ENCODE measurements at regions of chr17 and their contacts with region 1.

Region 1: GRCh38 chr17:44385287-44386181 is 3.9 kb downstream of the ITGA2B start:
- DNase-seq: peak; percentile 91
- H3K4me3 Mint-ChIP-seq: peak overlapping the region; percentile 69
- H3K27ac Mint-ChIP-seq: no peak overlapping the region
- H3K4me1 Mint-ChIP-seq: peaks cover 7% of the 10 kb centered on the region
- H3K27me3 Mint-ChIP-seq: peaks cover 37% of the 10 kb centered on the region
- CTCF ChIP-seq: no peak

Region 2: DNA sequence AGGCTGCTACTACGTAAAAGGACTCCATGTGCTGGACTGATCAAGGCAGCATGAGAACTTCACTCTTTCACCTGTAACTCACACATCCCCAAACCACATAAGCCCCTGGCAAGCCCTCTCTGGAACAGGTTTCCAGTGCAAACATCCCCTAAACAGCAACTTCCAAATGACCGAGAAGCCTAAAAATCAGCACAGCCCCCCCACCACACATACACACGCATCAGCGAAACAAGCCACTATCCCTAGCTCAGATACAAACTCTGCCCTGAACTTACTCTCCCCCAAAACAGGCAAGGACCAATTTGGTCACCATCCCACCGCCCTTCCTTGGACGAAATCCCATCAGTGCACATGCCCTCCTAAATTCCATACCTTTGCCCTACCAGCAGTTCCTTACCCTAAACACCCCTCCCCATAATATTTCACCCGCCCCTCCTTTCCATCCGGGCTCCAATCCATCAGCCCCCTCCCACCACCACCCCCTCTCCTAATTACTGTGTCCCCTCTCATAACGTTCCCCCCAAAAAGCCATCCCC is 319.8 kb before region 1 on chr17:
- CTCF ChIA-PET with region 1: no interaction called
- intact Hi-C with region 1: no loop called
- DNase-seq: no peak
- H3K4me3 Mint-ChIP-seq: peak overlapping the region; percentile 88
- H3K27ac Mint-ChIP-seq: peak overlapping the region; percentile 85
- H3K4me1 Mint-ChIP-seq: peaks cover 42% of the 10 kb centered on the region
- H3K27me3 Mint-ChIP-seq: no peaks in the 10 kb centered on the region
- CTCF ChIP-seq: no peak

Region 3: DNA sequence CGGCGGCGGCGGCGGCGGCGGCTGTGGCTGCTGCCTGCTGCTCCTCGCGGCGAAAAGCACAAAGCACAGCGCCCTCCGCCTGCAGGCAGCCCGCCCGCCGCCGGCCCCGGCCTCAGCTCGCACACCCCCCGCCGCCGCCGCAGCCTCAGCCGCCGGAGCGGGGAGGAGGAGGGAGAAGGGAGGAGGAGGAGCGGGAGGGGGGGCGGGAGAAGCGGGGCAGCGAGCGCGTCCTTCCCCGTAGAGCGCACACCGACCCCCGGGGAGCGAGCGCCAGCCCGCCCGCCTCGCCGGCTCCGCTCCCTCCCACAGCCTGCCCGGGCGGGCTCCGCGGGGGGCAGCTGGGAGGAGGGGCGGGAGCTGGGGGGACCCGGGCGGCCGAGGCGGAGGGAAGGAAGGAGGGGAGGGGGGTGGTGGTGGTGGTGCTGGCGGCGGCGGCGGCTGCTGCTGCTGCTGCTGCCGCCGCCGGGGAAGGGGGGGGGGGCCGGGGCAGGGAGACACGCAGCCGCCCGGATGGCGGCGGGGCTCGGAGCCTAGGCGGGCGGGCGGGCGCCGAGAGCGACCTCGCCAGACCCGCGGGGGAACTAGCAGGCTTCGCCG is 165.8 kb before region 1 on chr17 and contains the start of gene UBTF:
- CTCF ChIA-PET with region 1: interaction called, 10 read pairs
- intact Hi-C with region 1: no loop called
- DNase-seq: peak; percentile 83
- H3K4me3 Mint-ChIP-seq: peak within 1 kb of the TSS; percentile 86
- H3K27ac Mint-ChIP-seq: peak within 1 kb of the TSS; percentile 79
- H3K4me1 Mint-ChIP-seq: peaks cover 37% of the 10 kb centered on the region
- H3K27me3 Mint-ChIP-seq: no peaks in the 10 kb centered on the region
- CTCF ChIP-seq: no peak
- total RNA-seq, gene UBTF: 92.1 and 94.2 TPM in 2 replicates

Region 4: GRCh38 chr17:44266402-44267164 is 119.0 kb before region 1 on chr17:
- CTCF ChIA-PET with region 1: no interaction called
- intact Hi-C with region 1: no loop called
- DNase-seq: no peak
- H3K4me3 Mint-ChIP-seq: no peak overlapping the region
- H3K27ac Mint-ChIP-seq: no peak overlapping the region
- H3K4me1 Mint-ChIP-seq: no peaks in the 10 kb centered on the region
- H3K27me3 Mint-ChIP-seq: peaks cover 58% of the 10 kb centered on the region
- CTCF ChIP-seq: no peak

Region 5: GRCh38 chr17:44363613-44364159 is 21.8 kb before region 1 on chr17 and contains the start of gene FAM171A2:
- CTCF ChIA-PET with region 1: interaction called, 10 read pairs
- intact Hi-C with region 1: no loop called
- DNase-seq: peak; percentile 87
- H3K4me3 Mint-ChIP-seq: peak within 1 kb of the TSS; percentile 63
- H3K27ac Mint-ChIP-seq: no peak within 1 kb of the TSS
- H3K4me1 Mint-ChIP-seq: peaks cover 10% of the 10 kb centered on the region
- H3K27me3 Mint-ChIP-seq: peaks cover 87% of the 10 kb centered on the region
- CTCF ChIP-seq: peak; percentile 96
- total RNA-seq, gene FAM171A2: 0.95 and 2.0 TPM in 2 replicates

Region 6: GRCh38 chr17:44444735-44445105 is 59.2 kb after region 1 on chr17:
- CTCF ChIA-PET with region 1: interaction called, 10 read pairs
- intact Hi-C with region 1: no loop called
- DNase-seq: no peak
- H3K4me3 Mint-ChIP-seq: no peak overlapping the region
- H3K27ac Mint-ChIP-seq: no peak overlapping the region
- H3K4me1 Mint-ChIP-seq: no peaks in the 10 kb centered on the region
- H3K27me3 Mint-ChIP-seq: no peaks in the 10 kb centered on the region
- CTCF ChIP-seq: no peak

Region 7: DNA sequence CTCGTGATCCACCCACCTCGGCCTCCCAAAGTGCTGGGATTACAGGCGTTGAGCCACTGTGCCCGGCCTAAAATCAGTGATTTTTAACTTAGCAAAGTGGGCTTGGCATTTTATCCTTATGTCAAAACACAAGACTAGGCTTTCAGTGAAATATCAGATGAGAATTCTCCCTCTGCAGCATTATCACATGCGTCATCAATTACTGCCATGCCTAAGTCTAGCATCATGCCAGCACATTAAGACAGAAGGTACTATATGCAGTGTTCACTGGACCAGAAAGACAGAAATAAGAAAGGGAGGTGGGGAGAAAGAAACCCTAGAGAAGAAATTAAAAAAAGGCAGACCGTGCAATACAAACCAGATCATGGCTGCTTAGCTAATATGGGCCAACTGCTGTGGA is 87.8 kb after region 1 on chr17:
- CTCF ChIA-PET with region 1: no interaction called
- intact Hi-C with region 1: no loop called
- DNase-seq: no peak
- H3K4me3 Mint-ChIP-seq: no peak overlapping the region
- H3K27ac Mint-ChIP-seq: no peak overlapping the region
- H3K4me1 Mint-ChIP-seq: no peaks in the 10 kb centered on the region
- H3K27me3 Mint-ChIP-seq: no peaks in the 10 kb centered on the region
- CTCF ChIP-seq: no peak

Measured in Calu3 (cell line).